CD8-positive, alpha-beta T cell (primary cell): ENCODE measurements at regions of chr3 and their contacts with region 1.

Region 1: DNA sequence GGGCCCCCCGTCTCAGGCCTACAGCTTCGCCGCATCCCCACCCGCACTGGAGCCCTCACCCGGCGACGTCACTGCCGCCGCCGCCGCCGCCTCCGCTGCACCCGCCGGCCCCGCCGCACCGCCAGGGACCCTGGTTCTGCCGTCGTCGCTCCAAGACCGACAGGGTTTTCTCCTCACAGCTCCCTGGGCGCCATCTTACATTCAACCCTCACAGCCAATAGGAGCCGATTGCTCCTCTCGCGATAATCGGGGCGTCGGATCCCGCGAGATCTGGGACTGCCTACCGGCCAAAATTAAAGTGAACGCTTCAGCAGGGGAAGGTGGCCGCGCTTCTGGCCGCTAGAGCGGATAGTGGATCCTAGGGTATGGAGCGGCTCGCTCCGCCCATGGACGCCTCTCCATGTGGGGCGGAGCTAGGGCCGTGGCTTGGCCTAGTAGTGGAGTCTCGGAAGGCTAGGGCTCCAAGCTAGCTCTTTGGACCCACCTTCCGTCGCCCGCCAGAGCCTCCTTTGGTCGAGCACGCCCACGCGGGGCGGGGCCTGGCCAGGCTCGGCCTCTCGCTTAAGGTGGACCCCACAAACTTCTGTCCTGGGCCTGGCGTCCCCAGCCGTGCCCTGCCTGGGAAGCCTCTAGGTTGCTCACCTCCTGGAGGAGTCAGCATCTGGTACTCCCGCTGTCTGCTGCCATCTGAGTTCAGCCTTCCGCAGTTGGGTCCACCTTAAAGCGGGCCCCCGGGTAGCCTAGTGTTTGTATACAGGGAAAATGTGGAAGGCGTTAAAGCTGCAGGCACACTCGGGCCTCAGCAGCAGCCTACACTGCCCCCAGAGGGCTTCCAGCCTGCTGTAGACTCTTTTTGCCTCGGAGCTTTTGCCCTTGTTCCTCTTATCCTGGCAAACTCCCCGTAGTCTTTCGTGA is at the start of gene QRICH1:
- DNase-seq: peak; percentile 90 to 98 (median 95)
- ATAC-seq: peak; percentile 77
- H3K4me3 ChIP-seq: peak within 1 kb of the TSS; percentile 76 to 95
- H3K4me3 Mint-ChIP-seq: peak within 1 kb of the TSS; percentile 91
- H3K27ac ChIP-seq: peak within 1 kb of the TSS; percentile 81 to 90
- H3K27ac Mint-ChIP-seq: peak within 1 kb of the TSS; percentile 99
- H3K4me1 ChIP-seq: peaks cover 33% of the 10 kb centered on the region
- H3K4me1 Mint-ChIP-seq: peaks cover 37% of the 10 kb centered on the region
- H3K27me3 ChIP-seq: no peaks in the 10 kb centered on the region
- H3K27me3 Mint-ChIP-seq: no peaks in the 10 kb centered on the region
- CTCF ChIP-seq: peak; percentile 67
- total RNA-seq, gene QRICH1: 232 to 246 TPM

Region 2: DNA sequence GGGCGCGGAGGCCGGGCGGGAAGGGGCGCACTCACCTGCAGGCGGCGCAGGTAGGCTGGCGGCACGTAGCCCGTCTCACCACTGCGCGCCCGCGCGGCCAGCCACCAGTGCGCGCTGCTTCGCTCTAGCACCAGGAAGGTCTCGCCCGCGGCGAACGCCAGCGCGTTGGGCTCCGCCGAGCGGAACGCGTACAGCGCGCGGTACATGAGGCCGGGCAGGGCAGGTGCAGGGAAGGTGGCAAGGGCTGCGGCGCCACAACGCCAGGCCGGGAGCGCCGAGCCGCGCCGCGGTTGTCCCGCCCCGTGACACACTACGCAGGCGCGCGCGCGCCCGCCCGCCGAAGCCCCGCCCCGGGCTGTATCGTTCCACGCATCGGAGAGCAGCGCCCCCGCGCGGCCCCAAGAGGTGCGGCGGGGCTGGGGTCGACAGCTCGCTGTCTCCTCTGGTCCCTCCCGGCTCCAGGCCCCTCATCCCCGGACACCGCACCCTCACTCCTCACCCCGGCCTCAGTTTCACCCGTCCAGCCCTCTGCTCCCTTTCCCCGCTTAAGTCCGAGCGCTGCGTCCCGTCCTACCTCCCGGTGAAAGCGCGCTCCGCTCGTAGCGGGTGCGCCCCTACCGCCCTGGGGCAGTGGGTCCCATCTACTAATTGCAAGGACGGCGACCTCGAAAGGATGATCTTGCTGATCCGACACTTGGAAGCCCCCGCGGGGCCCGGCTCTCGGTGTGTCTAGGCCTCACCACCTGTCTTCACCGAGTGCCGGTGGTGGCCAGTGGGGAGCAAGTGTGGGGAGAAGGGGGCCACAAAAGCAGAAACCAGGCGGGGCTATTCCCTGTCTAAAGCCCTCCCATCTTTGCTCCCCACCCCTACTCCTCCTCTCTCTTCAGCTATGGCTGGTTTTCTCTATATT is 408.3 kb before region 1 on chr3 and contains the start of gene NCKIPSD:
- CTCF ChIA-PET with region 1: no interaction called
- POLR2A ChIA-PET with region 1: no interaction called
- intact Hi-C with region 1: loop called in 1 of 2 experiments (anchors 2 kb)
- DNase-seq: peak; percentile 81 to 97 (median 91)
- ATAC-seq: peak; percentile 92
- H3K4me3 ChIP-seq: peak within 1 kb of the TSS; percentile 63 to 85
- H3K4me3 Mint-ChIP-seq: peak within 1 kb of the TSS; percentile 93
- H3K27ac ChIP-seq: peak within 1 kb of the TSS; percentile 58 to 82
- H3K27ac Mint-ChIP-seq: peak within 1 kb of the TSS; percentile 91
- H3K4me1 ChIP-seq: peaks cover 18% of the 10 kb centered on the region
- H3K4me1 Mint-ChIP-seq: peaks cover 22% of the 10 kb centered on the region
- H3K27me3 ChIP-seq: no peaks in the 10 kb centered on the region
- H3K27me3 Mint-ChIP-seq: no peaks in the 10 kb centered on the region
- CTCF ChIP-seq: peak; percentile 93
- total RNA-seq, gene NCKIPSD: 7.7 to 8.1 TPM

Region 3: DNA sequence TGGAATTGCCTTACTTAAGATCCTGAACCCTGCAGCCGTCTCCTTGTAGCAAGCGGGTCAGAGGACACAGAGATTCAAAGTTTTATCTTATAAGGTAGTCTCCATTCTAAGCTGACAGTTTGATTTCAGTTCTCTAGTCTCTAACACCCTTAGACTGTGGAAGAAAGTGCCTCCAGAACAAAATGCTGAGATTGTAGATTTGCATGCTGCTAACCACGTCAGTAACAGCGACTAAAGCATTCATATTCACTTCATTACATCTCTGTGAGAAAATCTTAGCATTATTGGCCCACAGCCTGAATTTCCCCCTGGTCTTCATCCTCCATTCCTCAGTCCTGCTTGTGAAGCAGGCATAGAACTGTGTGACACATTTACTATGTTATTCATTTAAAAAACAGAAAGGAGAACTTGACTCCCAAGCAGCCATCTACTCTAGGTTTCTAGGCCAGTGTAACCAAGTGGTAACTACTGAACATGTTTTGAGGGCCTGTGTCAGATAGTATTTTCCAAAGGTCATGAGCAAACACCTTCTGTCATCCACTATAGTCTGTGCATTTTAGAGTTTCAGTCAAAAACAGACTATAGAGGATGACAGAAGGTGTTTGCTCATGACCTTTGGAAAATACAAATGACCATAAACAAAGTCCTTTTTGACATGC is 148.1 kb before region 1 on chr3:
- CTCF ChIA-PET with region 1: no interaction called
- POLR2A ChIA-PET with region 1: no interaction called
- intact Hi-C with region 1: no loop called
- DNase-seq: no peak
- ATAC-seq: no peak
- H3K4me3 ChIP-seq: no peak overlapping the region
- H3K4me3 Mint-ChIP-seq: no peak overlapping the region
- H3K27ac ChIP-seq: no peak overlapping the region
- H3K27ac Mint-ChIP-seq: peak overlapping the region; percentile 14
- H3K4me1 ChIP-seq: no peaks in the 10 kb centered on the region
- H3K4me1 Mint-ChIP-seq: peaks cover 31% of the 10 kb centered on the region
- H3K27me3 ChIP-seq: no peaks in the 10 kb centered on the region
- H3K27me3 Mint-ChIP-seq: no peaks in the 10 kb centered on the region
- CTCF ChIP-seq: no peak

Region 4: GRCh38 chr3:48989796-48990635 is 104.1 kb before region 1 on chr3 and contains the start of gene P4HTM:
- CTCF ChIA-PET with region 1: interaction called, 8 read pairs
- POLR2A ChIA-PET with region 1: interaction called, 21 read pairs
- intact Hi-C with region 1: loop called (anchors 1 kb)
- DNase-seq: peak; percentile 41 to 90 (median 83)
- ATAC-seq: peak; percentile 78
- H3K4me3 ChIP-seq: peak within 1 kb of the TSS; percentile 71 to 76
- H3K4me3 Mint-ChIP-seq: peak within 1 kb of the TSS; percentile 95
- H3K27ac ChIP-seq: peak within 1 kb of the TSS; percentile 68 to 72
- H3K27ac Mint-ChIP-seq: peak within 1 kb of the TSS; percentile 95
- H3K4me1 ChIP-seq: peaks cover 19% of the 10 kb centered on the region
- H3K4me1 Mint-ChIP-seq: peaks cover 45% of the 10 kb centered on the region
- H3K27me3 ChIP-seq: no peaks in the 10 kb centered on the region
- H3K27me3 Mint-ChIP-seq: no peaks in the 10 kb centered on the region
- CTCF ChIP-seq: no peak
- total RNA-seq, gene P4HTM: 41.5 to 41.8 TPM

Region 5: GRCh38 chr3:49028673-49029562 is 65.2 kb before region 1 on chr3 and contains the start of gene IMPDH2:
- CTCF ChIA-PET with region 1: no interaction called
- POLR2A ChIA-PET with region 1: interaction called, 17 read pairs
- intact Hi-C with region 1: loop called (anchors 1 to 2 kb)
- DNase-seq: peak; percentile 86 to 98 (median 93)
- ATAC-seq: peak; percentile 95
- H3K4me3 ChIP-seq: peak within 1 kb of the TSS; percentile 52 to 81
- H3K4me3 Mint-ChIP-seq: peak within 1 kb of the TSS; percentile 92
- H3K27ac ChIP-seq: peak within 1 kb of the TSS; percentile 77 to 98
- H3K27ac Mint-ChIP-seq: peak within 1 kb of the TSS; percentile 97
- H3K4me1 ChIP-seq: peaks cover 13% of the 10 kb centered on the region
- H3K4me1 Mint-ChIP-seq: peaks cover 25% of the 10 kb centered on the region
- H3K27me3 ChIP-seq: no peaks in the 10 kb centered on the region
- H3K27me3 Mint-ChIP-seq: no peaks in the 10 kb centered on the region
- CTCF ChIP-seq: no peak
- total RNA-seq, gene IMPDH2: 115 to 117 TPM

Region 6: GRCh38 chr3:49158108-49158709 is 64.1 kb after region 1 on chr3:
- CTCF ChIA-PET with region 1: interaction called, 4 read pairs
- POLR2A ChIA-PET with region 1: interaction called, 6 read pairs
- intact Hi-C with region 1: loop called in 1 of 2 experiments (anchors 1 kb)
- DNase-seq: peak; percentile 36 to 77 (median 65)
- ATAC-seq: peak; percentile 98
- H3K4me3 ChIP-seq: no peak overlapping the region
- H3K4me3 Mint-ChIP-seq: no peak overlapping the region
- H3K27ac ChIP-seq: no peak overlapping the region
- H3K27ac Mint-ChIP-seq: peak overlapping the region; percentile 85
- H3K4me1 ChIP-seq: no peaks in the 10 kb centered on the region
- H3K4me1 Mint-ChIP-seq: peaks cover 5% of the 10 kb centered on the region
- H3K27me3 ChIP-seq: no peaks in the 10 kb centered on the region
- H3K27me3 Mint-ChIP-seq: no peaks in the 10 kb centered on the region
- CTCF ChIP-seq: peak; percentile 61

Region 7: DNA sequence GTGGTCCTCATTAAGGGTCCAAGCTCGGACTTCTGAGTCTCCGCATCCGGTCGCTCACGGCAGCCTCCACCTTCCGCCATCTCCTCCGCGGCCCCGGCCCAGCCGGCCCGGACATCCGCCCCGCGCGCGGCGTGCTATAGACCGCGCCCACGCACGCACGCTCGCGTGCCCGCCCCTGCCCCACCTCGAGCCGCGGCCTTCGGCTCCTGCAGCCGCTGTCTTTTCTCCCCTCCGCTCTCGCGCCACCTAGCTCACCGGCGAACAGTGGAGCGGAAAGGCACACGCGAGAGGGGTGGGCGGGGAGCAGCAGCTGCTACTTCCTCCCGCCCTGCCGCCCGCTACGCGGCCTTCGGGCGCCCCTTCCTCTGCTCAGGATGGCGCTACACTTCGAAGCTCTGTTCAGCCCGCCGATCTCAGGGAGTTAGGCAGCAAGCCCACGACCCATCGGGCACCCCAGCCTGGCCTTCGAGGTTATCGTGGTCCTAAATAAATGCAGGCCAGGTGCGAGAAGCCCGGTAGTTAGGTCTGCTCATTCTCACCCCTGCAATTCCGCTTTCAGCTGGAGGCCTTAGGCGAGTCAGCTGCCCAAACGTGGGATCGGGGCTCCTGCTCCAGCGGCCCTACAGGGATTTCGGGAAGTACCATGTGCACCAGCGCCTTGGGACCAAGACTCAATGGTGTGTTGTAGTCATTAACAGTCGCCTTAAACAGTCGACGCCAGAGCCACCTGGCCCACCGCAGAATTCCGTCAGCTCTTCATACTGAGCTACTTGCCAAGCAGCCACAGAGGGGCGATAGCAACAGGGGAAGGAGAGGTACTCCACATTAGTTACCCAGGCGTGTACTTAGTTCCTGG is 246.1 kb after region 1 on chr3 and contains the start of gene USP4:
- CTCF ChIA-PET with region 1: interaction called, 3 read pairs
- POLR2A ChIA-PET with region 1: interaction called, 9 read pairs
- intact Hi-C with region 1: loop called in 1 of 2 experiments (anchors 5 kb)
- DNase-seq: peak; percentile 79 to 97 (median 90)
- ATAC-seq: peak; percentile 85
- H3K4me3 ChIP-seq: peak within 1 kb of the TSS; percentile 78 to 89
- H3K4me3 Mint-ChIP-seq: peak within 1 kb of the TSS; percentile 93
- H3K27ac ChIP-seq: peak within 1 kb of the TSS; percentile 98
- H3K27ac Mint-ChIP-seq: peak within 1 kb of the TSS; percentile 96
- H3K4me1 ChIP-seq: peaks cover 40% of the 10 kb centered on the region
- H3K4me1 Mint-ChIP-seq: peaks cover 48% of the 10 kb centered on the region
- H3K27me3 ChIP-seq: no peaks in the 10 kb centered on the region
- H3K27me3 Mint-ChIP-seq: no peaks in the 10 kb centered on the region
- CTCF ChIP-seq: peak; percentile 36
- total RNA-seq, gene USP4: 78.0 to 92.4 TPM

Region 8: DNA sequence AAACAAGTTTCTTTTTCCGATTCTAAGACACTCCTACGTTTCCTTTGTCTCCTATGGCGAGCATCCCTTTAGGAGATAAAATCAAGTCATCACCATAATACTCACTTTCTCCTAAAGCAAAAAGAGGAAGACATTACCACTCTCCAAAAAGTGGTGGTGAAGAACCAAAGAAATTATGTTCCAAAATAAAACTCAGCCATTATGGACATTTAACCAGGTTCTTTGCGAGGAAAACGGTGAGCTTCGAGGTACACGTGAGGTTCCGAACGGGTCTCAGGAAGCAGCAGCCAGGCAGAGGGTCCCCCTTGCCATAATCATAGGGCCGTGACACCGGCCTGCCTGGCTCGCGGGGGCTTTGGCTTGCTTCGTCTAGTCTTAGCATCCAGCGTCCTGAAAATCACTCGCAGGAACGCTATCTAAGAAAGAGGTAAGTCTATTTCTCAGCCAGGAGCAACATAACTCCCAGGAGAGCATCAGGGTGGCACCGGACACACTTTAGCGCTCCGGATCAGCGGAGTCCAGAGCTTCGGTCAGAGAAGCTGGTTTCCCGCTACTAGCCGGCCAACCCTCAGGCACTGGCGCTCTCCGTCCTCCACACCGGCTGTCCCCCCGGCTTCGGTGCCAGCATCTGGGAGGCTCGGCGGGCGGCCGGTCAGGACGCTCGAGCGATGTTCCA is 691.6 kb after region 1 on chr3:
- CTCF ChIA-PET with region 1: no interaction called
- POLR2A ChIA-PET with region 1: no interaction called
- intact Hi-C with region 1: no loop called
- DNase-seq: peak in 4 of 9 experiments; percentile 31 to 64 (median 44)
- ATAC-seq: no peak
- H3K4me3 ChIP-seq: peak overlapping the region; percentile 86 to 87
- H3K4me3 Mint-ChIP-seq: peak overlapping the region; percentile 95
- H3K27ac ChIP-seq: peak overlapping the region; percentile 87 to 94
- H3K27ac Mint-ChIP-seq: peak overlapping the region; percentile 99
- H3K4me1 ChIP-seq: peaks cover 34% of the 10 kb centered on the region
- H3K4me1 Mint-ChIP-seq: peaks cover 46% of the 10 kb centered on the region
- H3K27me3 ChIP-seq: no peaks in the 10 kb centered on the region
- H3K27me3 Mint-ChIP-seq: no peaks in the 10 kb centered on the region
- CTCF ChIP-seq: no peak